ENCODE measurements at regions of chr3 and their contacts with region 1.

Region 1: GRCh38 chr3:23202921-23203707 is at the start of gene UBE2E2:
- DNase-seq: peak; percentile 59 to 78
- ATAC-seq: peak; percentile 75 to 94 (median 87)
- H3K4me3 ChIP-seq: peak within 1 kb of the TSS; percentile 72 to 98 (median 92)
- H3K27ac ChIP-seq: peak within 1 kb of the TSS; percentile 66 to 93 (median 88)
- H3K4me1 ChIP-seq: peaks cover 0 to 49% (median 20%) of the 10 kb centered on the region in 9 donors
- H3K27me3 ChIP-seq: peaks cover 0 to 7% (median 0%) of the 10 kb centered on the region in 7 donors
- CTCF ChIP-seq: no peak
- total RNA-seq, gene UBE2E2: 35.1 to 63.8 (median 54.6) TPM

Region 2: GRCh38 chr3:23079932-23080373 is 123.2 kb before region 1 on chr3:
- intact Hi-C with region 1: no loop called
- DNase-seq: no peak
- ATAC-seq: no peak
- H3K4me3 ChIP-seq: no peak overlapping the region
- H3K27ac ChIP-seq: no peak overlapping the region
- H3K4me1 ChIP-seq: peaks cover 0 to 14% (median 6%) of the 10 kb centered on the region in 9 donors
- H3K27me3 ChIP-seq: no peaks in the 10 kb centered on the region
- CTCF ChIP-seq: no peak

Region 3: GRCh38 chr3:23761440-23761896 is 558.4 kb after region 1 on chr3:
- intact Hi-C with region 1: loop called in 1 of 10 experiments (anchors 10 kb)
- DNase-seq: no peak
- ATAC-seq: peak in 1 of 8 donors; percentile 50
- H3K4me3 ChIP-seq: no peak overlapping the region
- H3K27ac ChIP-seq: no peak overlapping the region
- H3K4me1 ChIP-seq: peaks cover 0 to 19% (median 8%) of the 10 kb centered on the region in 9 donors
- H3K27me3 ChIP-seq: no peaks in the 10 kb centered on the region
- CTCF ChIP-seq: peak in 7 of 9 donors; percentile 12 to 37 (median 21)